Activated CD8-positive, alpha-beta T cell treated with anti-CD3 and anti-CD28 coated beads for 36 hours (primary cell): ENCODE measurements at regions of chr16 and their contacts with region 1.

Region 1: DNA sequence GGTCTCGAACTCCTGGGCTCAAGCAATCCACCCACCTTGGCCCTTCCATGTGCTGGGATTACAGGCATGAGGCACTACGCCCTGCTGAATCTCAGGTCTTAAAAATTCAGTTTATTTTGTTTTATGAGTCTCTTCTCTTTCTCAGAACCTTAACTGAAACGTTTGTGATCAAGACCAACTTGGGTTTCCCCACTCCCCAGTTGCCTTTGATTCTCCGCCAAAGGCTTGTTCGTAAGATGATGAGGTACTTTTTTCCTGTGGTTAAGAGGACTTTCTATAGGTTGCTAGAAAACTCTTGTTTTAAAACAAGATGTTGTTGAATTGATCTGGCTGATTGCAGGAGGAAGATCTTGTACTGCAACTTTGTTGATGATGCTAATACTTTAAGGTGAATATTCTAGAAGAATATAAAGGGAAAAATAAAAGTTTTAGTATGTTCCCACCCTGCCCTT is 11.7 kb downstream of the ABCC1 start:
- DNase-seq: peak; percentile 90
- ATAC-seq: peak; percentile 82
- H3K4me3 Mint-ChIP-seq: peak overlapping the region; percentile 76
- H3K27ac Mint-ChIP-seq: peak overlapping the region; percentile 99
- H3K4me1 Mint-ChIP-seq: peaks cover 80% of the 10 kb centered on the region
- H3K27me3 Mint-ChIP-seq: no peaks in the 10 kb centered on the region
- CTCF ChIP-seq: no peak

Region 2: GRCh38 chr16:15949210-15950160 is 11.6 kb before region 1 on chr16 and contains the start of gene ABCC1:
- CTCF ChIA-PET with region 1: interaction called, 3 read pairs
- POLR2A ChIA-PET with region 1: interaction called, 32 read pairs
- intact Hi-C with region 1: no loop called
- DNase-seq: peak; percentile 82
- ATAC-seq: peak; percentile 67
- H3K4me3 Mint-ChIP-seq: peak within 1 kb of the TSS; percentile 85
- H3K27ac Mint-ChIP-seq: peak within 1 kb of the TSS; percentile 99
- H3K4me1 Mint-ChIP-seq: peaks cover 47% of the 10 kb centered on the region
- H3K27me3 Mint-ChIP-seq: no peaks in the 10 kb centered on the region
- CTCF ChIP-seq: no peak
- total RNA-seq, gene ABCC1: 64.5 to 67.6 TPM

Region 3: GRCh38 chr16:16021988-16022682 is 61.0 kb after region 1 on chr16:
- CTCF ChIA-PET with region 1: no interaction called
- POLR2A ChIA-PET with region 1: interaction called, 4 read pairs
- intact Hi-C with region 1: loop called (anchors 10 kb)
- DNase-seq: no peak
- ATAC-seq: no peak
- H3K4me3 Mint-ChIP-seq: no peak overlapping the region
- H3K27ac Mint-ChIP-seq: peak overlapping the region; percentile 2
- H3K4me1 Mint-ChIP-seq: peaks cover 33% of the 10 kb centered on the region
- H3K27me3 Mint-ChIP-seq: no peaks in the 10 kb centered on the region
- CTCF ChIP-seq: no peak

Region 4: GRCh38 chr16:16052916-16053315 is 91.8 kb after region 1 on chr16:
- CTCF ChIA-PET with region 1: no interaction called
- POLR2A ChIA-PET with region 1: no interaction called
- intact Hi-C with region 1: no loop called
- DNase-seq: no peak
- ATAC-seq: no peak
- H3K4me3 Mint-ChIP-seq: no peak overlapping the region
- H3K27ac Mint-ChIP-seq: no peak overlapping the region
- H3K4me1 Mint-ChIP-seq: no peaks in the 10 kb centered on the region
- H3K27me3 Mint-ChIP-seq: no peaks in the 10 kb centered on the region
- CTCF ChIP-seq: no peak